ENCODE measurements at regions of chr11 and their contacts with region 1.

Region 1: GRCh38 chr11:68383976-68384501 is 71.6 kb downstream of the LRP5 start:
- DNase-seq: no peak
- H3K4me3 ChIP-seq: no peak overlapping the region
- H3K27ac ChIP-seq: no peak overlapping the region
- H3K4me1 ChIP-seq: peaks cover 14% of the 10 kb centered on the region
- H3K27me3 ChIP-seq: no peaks in the 10 kb centered on the region
- CTCF ChIP-seq: peak; percentile 75 to 94

Region 2: DNA sequence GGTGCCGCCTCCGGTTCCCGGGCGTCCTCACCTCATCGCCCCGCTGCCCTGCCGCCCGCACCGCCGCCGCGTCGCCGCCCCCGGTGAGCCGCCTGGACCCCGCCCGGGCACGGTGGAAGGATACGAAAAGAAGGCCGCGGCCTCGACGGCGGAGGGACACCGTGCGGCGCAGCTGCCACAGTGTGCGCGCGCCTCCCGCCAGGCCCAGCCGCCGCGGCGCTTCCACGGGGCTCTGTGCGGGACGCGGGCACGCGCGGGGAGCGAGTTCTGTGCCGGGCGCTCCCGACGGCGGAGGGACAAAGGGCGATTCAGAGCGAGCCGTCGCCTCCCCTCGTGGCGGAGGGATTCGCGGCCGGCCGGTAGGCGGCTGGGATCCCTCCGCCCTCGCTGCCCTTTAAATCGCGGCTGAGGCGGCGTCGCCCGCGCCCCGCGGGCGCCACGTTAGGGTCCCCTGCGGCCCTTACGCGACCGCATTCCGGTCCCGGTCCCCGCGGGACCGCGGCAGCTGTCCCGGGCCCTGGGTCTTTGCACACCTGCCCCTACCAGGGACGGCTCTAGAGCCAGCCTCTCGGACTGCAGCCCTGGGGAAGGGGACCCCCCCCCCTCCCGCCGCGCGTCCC is 170.4 kb before region 1 on chr11:
- CTCF ChIA-PET with region 1: no interaction called
- dilution Hi-C with region 1: no loop called
- in situ Hi-C with region 1: no loop called
- intact Hi-C with region 1: loop called (anchors 5 kb)
- DNase-seq: peak; percentile 91
- H3K4me3 ChIP-seq: peak overlapping the region; percentile 46 to 66 (median 66)
- H3K27ac ChIP-seq: peak overlapping the region; percentile 52
- H3K4me1 ChIP-seq: peaks cover 39% of the 10 kb centered on the region
- H3K27me3 ChIP-seq: peaks cover 1% of the 10 kb centered on the region
- CTCF ChIP-seq: no peak

Region 3: GRCh38 chr11:68297812-68298658 is 86.0 kb before region 1 on chr11:
- CTCF ChIA-PET with region 1: interaction called, 4 read pairs
- dilution Hi-C with region 1: no loop called
- in situ Hi-C with region 1: no loop called
- intact Hi-C with region 1: loop called (anchors 1 kb)
- DNase-seq: peak; percentile 58
- H3K4me3 ChIP-seq: no peak overlapping the region
- H3K27ac ChIP-seq: no peak overlapping the region
- H3K4me1 ChIP-seq: peaks cover 9% of the 10 kb centered on the region
- H3K27me3 ChIP-seq: no peaks in the 10 kb centered on the region
- CTCF ChIP-seq: peak; percentile 80 to 98

Region 4: DNA sequence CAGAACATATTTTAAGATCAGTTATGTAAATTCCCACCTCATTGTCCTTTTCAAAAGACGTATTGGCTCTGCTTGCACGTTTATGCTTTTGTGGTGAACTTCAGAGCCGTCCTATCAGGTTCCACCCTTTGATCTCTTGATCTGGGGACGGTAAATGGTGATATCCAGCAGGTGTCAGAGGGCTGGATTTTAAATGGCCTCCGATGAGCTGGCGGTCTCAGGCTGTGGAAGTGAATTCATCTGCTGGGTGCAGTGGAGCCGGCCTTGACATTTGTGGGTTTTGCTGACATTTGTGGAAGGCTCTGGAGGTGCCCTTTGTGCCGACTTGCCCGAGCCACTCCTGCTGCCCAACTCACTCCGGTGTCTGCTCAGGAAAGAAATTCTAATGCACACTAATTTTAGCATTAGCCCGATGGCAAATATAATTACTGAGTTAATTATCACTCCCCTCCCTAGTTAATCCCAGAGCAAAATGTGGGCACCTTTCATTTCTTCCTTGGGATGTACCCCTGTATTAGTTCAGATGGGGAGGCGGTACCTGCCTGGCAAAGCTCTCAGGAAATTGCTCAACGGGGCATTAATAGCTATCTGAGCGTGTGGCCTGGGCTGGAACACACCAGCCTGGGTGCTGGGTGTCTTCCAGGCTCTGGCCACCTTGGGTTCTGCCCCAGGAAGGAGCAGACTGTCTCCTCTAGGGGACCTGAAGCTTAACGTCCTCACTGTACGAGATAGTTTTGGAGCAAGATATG is 62.6 kb before region 1 on chr11:
- CTCF ChIA-PET with region 1: no interaction called
- dilution Hi-C with region 1: loop called (anchors 5 kb)
- in situ Hi-C with region 1: no loop called
- intact Hi-C with region 1: no loop called
- DNase-seq: peak; percentile 55
- H3K4me3 ChIP-seq: no peak overlapping the region
- H3K27ac ChIP-seq: peak overlapping the region; percentile 19
- H3K4me1 ChIP-seq: peaks cover 30% of the 10 kb centered on the region
- H3K27me3 ChIP-seq: no peaks in the 10 kb centered on the region
- CTCF ChIP-seq: no peak

Region 5: GRCh38 chr11:68436985-68437926 is 53.2 kb after region 1 on chr11:
- CTCF ChIA-PET with region 1: no interaction called
- dilution Hi-C with region 1: loop called (anchors 10 kb)
- in situ Hi-C with region 1: no loop called
- intact Hi-C with region 1: no loop called
- DNase-seq: peak; percentile 75
- H3K4me3 ChIP-seq: no peak overlapping the region
- H3K27ac ChIP-seq: no peak overlapping the region
- H3K4me1 ChIP-seq: peaks cover 22% of the 10 kb centered on the region
- H3K27me3 ChIP-seq: no peaks in the 10 kb centered on the region
- CTCF ChIP-seq: peak in 1 of 2 donors; percentile 15

Measured in mammary epithelial cell (primary cell).